GM13976 (cell line): ENCODE measurements at regions of chr3 and their contacts with region 1.

Region 1: DNA sequence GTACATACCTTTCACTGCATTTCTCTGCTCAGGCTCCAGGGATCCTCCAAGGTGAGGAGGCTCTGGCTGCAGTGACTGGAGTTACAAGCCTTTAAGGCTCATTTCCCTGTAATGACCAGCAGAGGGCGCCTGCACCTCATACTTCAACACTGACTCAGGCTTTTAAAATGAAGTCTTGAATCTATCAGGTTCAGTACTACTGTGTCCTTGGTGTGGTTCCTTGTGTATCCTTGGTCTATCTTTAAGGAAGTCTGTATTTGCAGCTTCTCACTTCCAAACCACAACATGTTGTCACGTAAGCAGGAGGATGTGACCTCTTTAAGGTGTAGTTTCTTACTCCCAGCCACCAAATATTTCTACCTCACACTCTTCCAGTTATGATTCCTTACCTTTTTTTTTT is 122.5 kb upstream of the ZBED2 start:
- DNase-seq: peak; percentile 72
- CTCF ChIP-seq: peak; percentile 88

Region 2: GRCh38 chr3:111971533-111972130 is 254.0 kb after region 1 on chr3:
- in situ Hi-C with region 1: loop called (anchors 5 kb)
- DNase-seq: no peak
- CTCF ChIP-seq: no peak